ENCODE measurements at regions of chr19 and their contacts with region 1.

Region 1: GRCh38 chr19:46283771-46284170 is 13.1 kb upstream of the HIF3A start:
- DNase-seq: no peak
- ATAC-seq: no peak
- H3K4me3 Mint-ChIP-seq: no peak overlapping the region
- H3K27ac Mint-ChIP-seq: no peak overlapping the region
- H3K4me1 Mint-ChIP-seq: no peaks in the 10 kb centered on the region
- H3K27me3 Mint-ChIP-seq: peaks cover 9% of the 10 kb centered on the region

Region 2: DNA sequence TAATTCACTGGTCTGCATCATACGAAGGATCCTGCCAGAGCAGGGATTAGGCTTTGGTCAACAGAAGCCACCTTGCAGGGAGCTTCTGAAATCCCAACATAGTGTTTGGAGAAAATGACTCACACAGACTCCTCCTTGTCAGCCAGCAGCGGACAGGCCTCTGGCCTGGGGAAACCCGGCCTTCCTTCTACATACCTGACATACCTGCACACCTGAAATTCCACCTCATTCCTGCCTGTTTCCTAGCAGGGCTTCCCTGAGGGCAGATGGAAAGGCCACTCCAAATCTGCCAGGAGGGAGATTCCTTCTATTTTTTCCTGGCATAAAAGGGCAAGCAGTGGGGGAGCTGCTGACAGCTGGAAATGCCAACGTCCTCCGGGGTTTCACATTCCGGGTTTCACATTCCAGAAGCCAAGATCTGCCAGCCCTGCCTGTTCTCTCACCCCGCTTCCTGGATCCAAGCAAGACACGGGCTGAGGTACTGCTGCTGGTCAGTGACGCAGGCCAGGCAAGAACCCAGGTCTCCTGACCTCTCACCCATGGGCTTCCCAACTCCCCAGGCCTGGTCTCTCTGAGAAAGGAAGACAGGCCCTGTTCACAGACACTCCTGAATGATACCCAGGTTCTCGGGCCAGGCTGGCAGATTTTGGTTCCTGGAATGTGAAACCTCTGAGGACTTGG is 72.4 kb before region 1 on chr19:
- CTCF ChIA-PET with region 1: no interaction called
- DNase-seq: no peak
- ATAC-seq: no peak
- H3K4me3 Mint-ChIP-seq: no peak overlapping the region
- H3K27ac Mint-ChIP-seq: no peak overlapping the region
- H3K4me1 Mint-ChIP-seq: no peaks in the 10 kb centered on the region
- H3K27me3 Mint-ChIP-seq: peaks cover 46% of the 10 kb centered on the region

Region 3: GRCh38 chr19:46265217-46265828 is 18.4 kb before region 1 on chr19:
- CTCF ChIA-PET with region 1: interaction called, 13 read pairs
- DNase-seq: peak; percentile 80
- ATAC-seq: peak; percentile 76
- H3K4me3 Mint-ChIP-seq: no peak overlapping the region
- H3K27ac Mint-ChIP-seq: no peak overlapping the region
- H3K4me1 Mint-ChIP-seq: peaks cover 17% of the 10 kb centered on the region
- H3K27me3 Mint-ChIP-seq: peaks cover 78% of the 10 kb centered on the region

Region 4: GRCh38 chr19:46308510-46308909 is 24.7 kb after region 1 on chr19:
- CTCF ChIA-PET with region 1: no interaction called
- DNase-seq: no peak
- ATAC-seq: no peak
- H3K4me3 Mint-ChIP-seq: no peak overlapping the region
- H3K27ac Mint-ChIP-seq: no peak overlapping the region
- H3K4me1 Mint-ChIP-seq: no peaks in the 10 kb centered on the region
- H3K27me3 Mint-ChIP-seq: no peaks in the 10 kb centered on the region

Region 5: GRCh38 chr19:46346821-46347571 is 63.2 kb after region 1 on chr19 and contains the start of gene PPP5C:
- CTCF ChIA-PET with region 1: interaction called, 15 read pairs
- DNase-seq: peak; percentile 93
- ATAC-seq: peak; percentile 75
- H3K4me3 Mint-ChIP-seq: peak within 1 kb of the TSS; percentile 93
- H3K27ac Mint-ChIP-seq: peak within 1 kb of the TSS; percentile 91
- H3K4me1 Mint-ChIP-seq: peaks cover 52% of the 10 kb centered on the region
- H3K27me3 Mint-ChIP-seq: peaks cover 9% of the 10 kb centered on the region
- total RNA-seq, gene PPP5C: 99.2 to 110 TPM

Region 6: DNA sequence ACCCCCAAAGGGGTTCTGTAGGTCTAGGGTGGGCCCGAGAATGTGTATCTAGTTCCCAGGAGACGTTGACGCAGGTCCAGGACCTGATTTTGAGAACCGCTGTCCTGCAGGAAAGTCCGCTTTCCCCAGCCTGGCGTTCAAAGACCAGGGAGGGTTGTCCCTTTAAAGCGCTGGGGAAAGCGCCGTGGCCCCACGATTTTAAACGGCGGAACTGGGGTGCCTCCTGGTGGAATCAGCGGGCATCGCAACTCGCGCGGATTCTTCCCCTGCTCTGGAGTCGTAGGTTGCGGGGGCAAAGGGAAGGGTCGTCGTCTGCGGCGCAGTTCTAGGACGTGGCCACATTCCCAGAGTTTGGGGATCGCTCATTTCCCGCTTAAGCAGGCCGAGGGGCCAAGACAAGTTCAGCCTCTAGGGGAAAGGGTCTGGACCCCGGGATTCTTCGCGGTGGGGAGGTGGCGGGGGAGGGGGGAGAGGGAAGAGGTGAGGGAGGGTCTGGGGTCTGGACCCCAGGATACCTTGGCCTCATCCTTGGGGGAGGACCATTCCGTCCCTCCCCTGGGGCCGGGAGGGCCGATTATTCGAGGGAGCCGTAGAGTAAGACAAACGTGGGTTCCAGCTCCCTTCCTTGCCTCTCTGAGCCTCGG is 204.2 kb after region 1 on chr19:
- CTCF ChIA-PET with region 1: interaction called, 12 read pairs
- DNase-seq: peak; percentile 77
- ATAC-seq: peak; percentile 67
- H3K4me3 Mint-ChIP-seq: no peak overlapping the region
- H3K27ac Mint-ChIP-seq: no peak overlapping the region
- H3K4me1 Mint-ChIP-seq: no peaks in the 10 kb centered on the region
- H3K27me3 Mint-ChIP-seq: peaks cover 80% of the 10 kb centered on the region